ENCODE measurements at regions of chr5 and their contacts with region 1.

Region 1: GRCh38 chr5:33445798-33446197 is 5.0 kb downstream of the TARS1 start:
- DNase-seq: no peak
- H3K4me3 ChIP-seq: no peak overlapping the region
- H3K27ac ChIP-seq: no peak overlapping the region
- H3K4me1 ChIP-seq: peaks cover 17% of the 10 kb centered on the region
- H3K27me3 ChIP-seq: no peaks in the 10 kb centered on the region
- CTCF ChIP-seq: no peak

Region 2: GRCh38 chr5:33300209-33300742 is 145.5 kb before region 1 on chr5:
- CTCF ChIA-PET with region 1: no interaction called
- POLR2A ChIA-PET with region 1: no interaction called
- intact Hi-C with region 1: no loop called
- DNase-seq: no peak
- H3K4me3 ChIP-seq: no peak overlapping the region
- H3K27ac ChIP-seq: no peak overlapping the region
- H3K4me1 ChIP-seq: no peaks in the 10 kb centered on the region; the same call in 1 of the 2 replicates
- H3K27me3 ChIP-seq: no peaks in the 10 kb centered on the region
- CTCF ChIP-seq: 0 out of 2 replicates have a peak, but pooled peaks have one; percentile 12

Region 3: DNA sequence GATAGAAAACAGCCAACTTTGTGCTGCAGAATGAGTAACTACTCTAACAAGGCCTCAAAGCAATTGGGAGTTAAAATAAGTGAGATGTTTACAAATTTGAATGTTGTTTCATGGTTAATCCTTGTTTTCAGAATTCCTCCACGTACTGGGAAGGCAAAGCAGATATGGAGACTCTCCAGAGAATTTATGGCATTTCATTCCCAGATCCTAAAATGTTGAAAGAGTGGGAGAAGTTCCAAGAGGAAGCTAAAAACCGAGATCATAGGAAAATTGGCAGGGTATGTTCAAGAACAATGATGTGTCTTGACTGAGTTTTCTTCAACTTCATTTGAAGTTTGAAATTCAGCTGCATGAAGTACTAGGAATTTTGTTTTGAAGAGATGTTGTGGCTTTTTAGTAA is 11.3 kb after region 1 on chr5:
- CTCF ChIA-PET with region 1: no interaction called
- POLR2A ChIA-PET with region 1: interaction called, 7 read pairs
- intact Hi-C with region 1: loop called (anchors 1 kb)
- DNase-seq: no peak
- H3K4me3 ChIP-seq: no peak overlapping the region
- H3K27ac ChIP-seq: no peak overlapping the region
- H3K4me1 ChIP-seq: 0 out of 2 replicates have a peak, but pooled peaks cover 5% of the 10 kb centered on the region
- H3K27me3 ChIP-seq: no peaks in the 10 kb centered on the region
- CTCF ChIP-seq: no peak

Region 4: DNA sequence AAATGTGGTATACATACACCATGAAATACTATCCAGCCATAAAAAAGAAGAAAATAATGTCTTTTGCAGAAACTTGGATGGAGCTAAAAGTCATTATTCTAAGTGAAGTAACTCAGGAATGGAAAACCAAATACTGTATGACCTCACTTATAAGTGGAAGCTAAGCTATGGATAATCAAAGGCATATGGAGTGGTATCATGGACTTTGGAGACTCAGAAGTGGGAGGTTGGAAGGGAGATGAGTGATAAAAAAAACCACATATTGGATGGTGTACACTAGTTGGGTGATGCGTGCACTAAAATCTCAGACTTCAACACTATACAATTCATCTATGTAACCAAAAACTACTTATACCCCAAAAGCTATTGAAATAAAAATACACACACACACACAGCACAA is 421.4 kb after region 1 on chr5:
- CTCF ChIA-PET with region 1: no interaction called
- POLR2A ChIA-PET with region 1: no interaction called
- intact Hi-C with region 1: no loop called
- DNase-seq: no peak
- H3K4me3 ChIP-seq: no peak overlapping the region
- H3K27ac ChIP-seq: no peak overlapping the region
- H3K4me1 ChIP-seq: no peaks in the 10 kb centered on the region; the same call in 1 of the 2 replicates
- H3K27me3 ChIP-seq: no peaks in the 10 kb centered on the region
- CTCF ChIP-seq: no peak